ENCODE measurements at regions of chr3 and their contacts with region 1.

Region 1: GRCh38 chr3:132722164-132723024 is at the start of gene NPHP3:
- DNase-seq: peak; percentile 79
- ATAC-seq: peak; percentile 85
- H3K4me3 ChIP-seq: peak within 1 kb of the TSS; percentile 89
- H3K27ac ChIP-seq: no peak within 1 kb of the TSS
- H3K4me1 ChIP-seq: peaks cover 15% of the 10 kb centered on the region
- H3K27me3 ChIP-seq: no peaks in the 10 kb centered on the region
- CTCF ChIP-seq: no peak
- total RNA-seq, gene NPHP3: 6.2 and 7.7 TPM in 2 replicates

Region 2: DNA sequence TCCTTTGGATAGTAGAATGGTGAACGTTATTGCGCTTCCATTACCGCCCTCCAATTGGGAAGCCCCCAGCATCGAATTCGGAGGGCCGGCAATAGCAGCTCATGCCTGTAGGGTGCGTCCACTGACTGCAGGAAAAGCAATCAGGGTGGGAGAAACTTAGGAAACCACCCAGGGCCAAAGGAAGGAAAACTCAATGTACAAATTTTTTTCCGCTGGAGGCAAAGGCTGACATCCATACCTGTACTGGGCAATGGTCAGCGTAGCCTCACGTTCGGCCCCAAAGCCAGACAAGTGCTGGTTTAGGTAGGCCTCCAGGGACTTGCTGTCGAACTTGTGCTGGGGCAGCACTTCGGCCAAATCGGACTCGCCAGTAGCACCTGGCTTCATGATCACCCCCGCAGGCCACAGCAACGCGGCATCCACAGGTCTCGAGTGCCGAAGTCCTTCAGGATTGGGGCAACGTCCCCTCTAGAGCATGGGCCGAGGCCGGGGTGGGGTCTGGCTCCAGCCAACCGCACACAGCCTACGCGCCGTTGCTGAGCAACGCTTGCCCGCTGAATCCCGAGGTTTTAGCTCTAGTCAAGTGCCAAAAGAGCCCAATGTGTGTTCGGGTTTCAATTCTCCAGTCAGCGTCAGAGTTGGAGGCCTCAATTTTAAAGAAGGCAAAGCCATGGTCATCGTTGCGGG is 62.9 kb before region 1 on chr3 and contains the start of gene ACAD11:
- CTCF ChIA-PET with region 1: no interaction called
- POLR2A ChIA-PET with region 1: no interaction called
- intact Hi-C with region 1: loop called (anchors 1 kb)
- DNase-seq: peak; percentile 52
- ATAC-seq: peak; percentile 71
- H3K4me3 ChIP-seq: peak within 1 kb of the TSS; percentile 93
- H3K27ac ChIP-seq: peak within 1 kb of the TSS; percentile 35
- H3K4me1 ChIP-seq: peaks cover 27% of the 10 kb centered on the region
- H3K27me3 ChIP-seq: no peaks in the 10 kb centered on the region
- CTCF ChIP-seq: peak; percentile 61
- total RNA-seq, gene ACAD11: 4.7 and 5.8 TPM in 2 replicates

Region 3: DNA sequence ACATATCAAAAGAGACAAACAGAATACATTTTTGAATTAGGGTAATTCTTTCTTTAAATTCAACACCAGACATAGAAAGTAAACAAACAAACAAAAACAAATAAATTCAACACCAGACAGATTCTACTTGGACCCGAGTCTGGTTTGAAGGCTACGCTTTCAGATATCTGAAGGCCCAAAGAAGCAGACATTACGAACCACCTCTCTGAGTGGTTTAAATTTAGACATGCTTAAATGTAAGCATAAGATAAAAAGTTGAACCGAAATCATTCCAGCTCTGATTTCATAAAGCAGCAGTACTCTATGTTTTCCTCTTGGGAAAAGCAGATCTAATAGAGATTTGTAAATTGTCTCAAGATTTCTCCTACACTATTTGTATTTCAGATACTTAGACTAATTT is 32.4 kb before region 1 on chr3:
- CTCF ChIA-PET with region 1: no interaction called
- POLR2A ChIA-PET with region 1: no interaction called
- intact Hi-C with region 1: no loop called
- DNase-seq: no peak
- ATAC-seq: no peak
- H3K4me3 ChIP-seq: no peak overlapping the region
- H3K27ac ChIP-seq: no peak overlapping the region
- H3K4me1 ChIP-seq: no peaks in the 10 kb centered on the region
- H3K27me3 ChIP-seq: no peaks in the 10 kb centered on the region
- CTCF ChIP-seq: no peak

Measured in PC-3 (cell line).